Aorta (tissue), 5 donors: ENCODE measurements at regions of chr5 and their contacts with region 1.

Region 1: DNA sequence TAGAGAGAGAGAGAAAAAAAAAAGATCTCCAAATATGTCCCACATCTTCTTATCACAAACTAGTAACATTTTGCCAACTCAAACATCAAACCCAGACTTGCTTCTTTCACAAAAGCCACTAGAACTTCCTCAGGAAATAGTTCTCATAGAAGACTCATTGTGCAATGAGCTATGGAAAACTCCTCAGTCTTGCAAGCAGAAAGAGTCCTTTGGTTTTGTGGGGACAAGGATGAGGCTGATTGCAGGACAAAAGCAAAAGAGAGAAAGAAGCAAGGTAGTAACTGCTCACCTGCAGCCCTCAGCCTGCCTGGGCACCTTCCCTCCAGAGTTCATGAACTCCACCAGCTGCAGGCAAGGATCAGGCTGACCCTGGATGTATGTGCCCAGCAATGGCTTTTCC is 399.0 kb downstream of the IRX1 start:
- DNase-seq: no peak
- ATAC-seq: peak; percentile 45
- H3K4me3 ChIP-seq: no peak overlapping the region
- H3K27ac ChIP-seq: peak overlapping the region; percentile 10 to 34
- H3K4me1 ChIP-seq: no peaks in the 10 kb centered on the region
- H3K27me3 ChIP-seq: no peaks in the 10 kb centered on the region

Region 2: DNA sequence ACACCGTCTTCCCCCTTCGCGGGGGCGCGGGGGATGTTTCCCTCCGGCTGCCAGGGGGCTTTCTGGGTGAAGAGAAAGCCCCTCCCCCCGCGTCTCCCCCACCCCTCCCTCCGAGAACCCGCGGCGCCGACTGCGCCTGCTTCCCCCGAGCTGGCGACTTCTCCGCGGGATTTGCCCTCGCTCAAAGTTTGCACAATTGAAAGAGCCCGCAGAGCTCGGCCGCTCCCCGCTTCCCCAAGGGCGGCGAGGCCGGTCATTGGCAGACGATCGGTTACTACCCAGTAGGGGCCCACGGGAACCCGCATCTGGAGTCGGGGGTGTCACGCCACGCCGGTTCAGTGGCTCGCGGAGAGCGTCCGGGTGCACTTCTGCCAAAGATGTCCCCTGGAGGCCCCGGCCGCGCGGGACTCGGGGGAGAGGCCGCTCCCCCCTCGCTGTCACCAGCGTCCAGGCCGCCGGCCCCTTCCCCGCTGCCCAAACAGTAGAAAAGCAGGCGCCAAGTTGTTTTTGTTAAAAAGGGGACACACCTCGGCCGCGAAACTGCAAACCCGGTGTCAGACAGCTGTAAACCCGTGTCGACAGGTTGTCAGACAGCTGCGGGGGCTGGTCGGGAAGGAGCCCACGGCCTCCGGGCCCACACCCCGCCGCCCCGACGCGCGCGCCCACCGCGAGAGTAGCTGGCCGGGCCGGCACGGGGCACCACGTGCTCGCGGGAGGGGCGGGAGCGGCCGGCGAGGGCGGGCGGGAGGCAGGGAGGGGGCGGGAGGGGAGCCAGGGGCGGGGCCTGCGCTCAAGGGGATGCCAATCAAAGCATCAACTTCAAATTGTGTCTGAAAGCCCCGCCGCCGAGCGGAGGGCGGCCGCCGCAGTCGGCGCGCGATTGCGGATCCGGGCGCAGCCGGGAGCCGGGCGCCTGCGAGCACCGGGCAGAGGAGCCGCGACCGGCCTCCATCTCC is 399.3 kb before region 1 on chr5 and contains the start of gene IRX1:
- intact Hi-C with region 1: loop called in 1 of 2 experiments (anchors 10 kb)
- DNase-seq: no peak
- ATAC-seq: no peak
- H3K4me3 ChIP-seq: peak within 1 kb of the TSS in 1 of 2 donors; percentile 23
- H3K27ac ChIP-seq: no peak within 1 kb of the TSS
- H3K4me1 ChIP-seq: no peaks in the 10 kb centered on the region
- H3K27me3 ChIP-seq: no peaks in the 10 kb centered on the region
- total RNA-seq, gene IRX1: 4.3 TPM in 1 of 2 donors, not detected in the other

Region 3: DNA sequence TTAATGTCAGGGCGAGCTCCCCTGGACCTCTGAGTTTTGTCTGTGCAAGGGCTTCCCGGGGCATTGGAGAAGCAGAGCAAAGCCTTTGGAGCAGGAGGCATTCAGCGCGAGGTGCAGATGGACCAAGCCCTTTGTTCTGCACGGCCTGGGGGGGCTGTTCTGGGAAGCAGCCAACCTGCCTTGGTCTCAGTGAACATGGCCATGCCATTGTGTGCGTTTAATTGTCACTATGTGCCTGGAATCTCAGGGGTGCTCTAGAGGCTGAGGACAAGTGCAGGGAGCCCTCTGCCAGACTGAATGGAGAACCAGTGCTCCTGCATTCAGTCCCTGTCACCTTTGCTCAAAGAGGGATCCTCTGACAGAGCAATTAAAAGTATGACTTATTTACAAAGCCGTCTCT is 69.6 kb before region 1 on chr5:
- intact Hi-C with region 1: no loop called
- DNase-seq: no peak
- ATAC-seq: no peak
- H3K4me3 ChIP-seq: no peak overlapping the region
- H3K27ac ChIP-seq: no peak overlapping the region
- H3K4me1 ChIP-seq: no peaks in the 10 kb centered on the region
- H3K27me3 ChIP-seq: no peaks in the 10 kb centered on the region

Region 4: GRCh38 chr5:4058899-4059298 is 64.3 kb after region 1 on chr5:
- intact Hi-C with region 1: loop called in 1 of 2 experiments (anchors 5 kb)
- DNase-seq: peak; percentile 74 to 77
- ATAC-seq: peak; percentile 81
- H3K4me3 ChIP-seq: no peak overlapping the region
- H3K27ac ChIP-seq: peak overlapping the region; percentile 18 to 32
- H3K4me1 ChIP-seq: peaks cover 0 to 4% of the 10 kb centered on the region in 2 donors
- H3K27me3 ChIP-seq: no peaks in the 10 kb centered on the region